ENCODE measurements at regions of chr15 and their contacts with region 1.

Region 1: GRCh38 chr15:73734839-73735238 is 18.3 kb downstream of the INSYN1 start:
- DNase-seq: no peak
- H3K4me3 ChIP-seq: no peak overlapping the region
- H3K4me3 Mint-ChIP-seq: no peak overlapping the region
- H3K27ac ChIP-seq: no peak overlapping the region
- H3K27ac Mint-ChIP-seq: no peak overlapping the region
- H3K4me1 ChIP-seq: no peaks in the 10 kb centered on the region
- H3K4me1 Mint-ChIP-seq: no peaks in the 10 kb centered on the region
- H3K27me3 ChIP-seq: no peaks in the 10 kb centered on the region
- H3K27me3 Mint-ChIP-seq: peaks cover 4 to 14% (median 7%) of the 10 kb centered on the region in 3 donors
- CTCF ChIP-seq: no peak

Region 2: DNA sequence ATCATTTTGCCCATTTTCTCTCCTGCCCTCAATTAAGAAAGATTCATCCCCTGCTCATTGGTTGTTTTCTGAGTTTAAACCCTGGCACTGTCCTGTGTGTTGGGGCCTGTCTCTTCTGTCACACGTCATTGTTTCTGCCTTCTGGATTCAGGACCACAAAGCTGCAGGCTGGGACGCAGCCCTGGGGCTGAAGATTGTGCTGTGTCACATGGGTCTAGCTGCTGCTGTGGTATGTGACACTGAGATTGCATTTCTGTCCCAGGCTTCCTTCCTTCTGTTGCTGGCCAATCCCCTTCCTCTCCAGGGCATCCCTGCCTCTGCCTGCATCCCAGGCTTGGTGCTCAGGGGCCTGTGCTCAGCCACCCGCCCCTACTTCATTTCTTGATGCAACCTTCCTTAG is 10.6 kb before region 1 on chr15:
- intact Hi-C with region 1: loop called in 1 of 2 experiments (anchors 1 kb)
- DNase-seq: no peak
- H3K4me3 ChIP-seq: no peak overlapping the region
- H3K4me3 Mint-ChIP-seq: no peak overlapping the region
- H3K27ac ChIP-seq: no peak overlapping the region
- H3K27ac Mint-ChIP-seq: peak overlapping the region in 1 of 7 donors; percentile 19
- H3K4me1 ChIP-seq: no peaks in the 10 kb centered on the region
- H3K4me1 Mint-ChIP-seq: peaks cover 5% of the 10 kb centered on the region
- H3K27me3 ChIP-seq: no peaks in the 10 kb centered on the region
- H3K27me3 Mint-ChIP-seq: peaks cover 14 to 18% (median 16%) of the 10 kb centered on the region in 3 donors
- CTCF ChIP-seq: no peak

Region 3: GRCh38 chr15:73809733-73810501 is 75.1 kb after region 1 on chr15:
- intact Hi-C with region 1: no loop called
- DNase-seq: no peak
- H3K4me3 ChIP-seq: no peak overlapping the region
- H3K4me3 Mint-ChIP-seq: no peak overlapping the region
- H3K27ac ChIP-seq: no peak overlapping the region
- H3K27ac Mint-ChIP-seq: no peak overlapping the region
- H3K4me1 ChIP-seq: no peaks in the 10 kb centered on the region
- H3K4me1 Mint-ChIP-seq: no peaks in the 10 kb centered on the region
- H3K27me3 ChIP-seq: no peaks in the 10 kb centered on the region
- H3K27me3 Mint-ChIP-seq: peaks cover 4 to 6% (median 5%) of the 10 kb centered on the region in 3 donors
- CTCF ChIP-seq: no peak